ENCODE measurements at regions of chr1 and their contacts with region 1.

Region 1: DNA sequence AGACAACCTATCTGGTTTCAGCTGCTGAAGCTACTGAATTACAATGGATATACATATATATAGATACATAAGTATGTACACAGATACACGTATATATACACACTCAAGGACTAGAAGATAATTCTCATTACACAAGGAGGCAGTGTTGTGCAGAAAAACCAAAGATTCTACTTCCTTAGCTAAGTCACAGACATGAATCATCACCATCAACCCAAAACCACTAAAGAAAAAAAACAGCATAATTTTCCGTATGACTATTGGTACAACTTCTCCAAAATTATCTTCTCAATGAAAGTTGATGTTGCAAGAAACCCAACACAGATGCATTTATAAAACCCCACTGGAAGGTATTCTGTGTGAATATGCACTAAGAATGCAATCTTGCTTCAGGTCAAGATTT is 36.8 kb upstream of the RPF1 start:
- DNase-seq: peak in 4 of 14 experiments; percentile 7 to 89 (median 86)
- ATAC-seq: peak; percentile 98
- H3K4me3 ChIP-seq: no peak overlapping the region
- H3K4me3 Mint-ChIP-seq: peak overlapping the region; percentile 5
- H3K27ac ChIP-seq: no peak overlapping the region
- H3K27ac Mint-ChIP-seq: peak overlapping the region; percentile 1
- H3K4me1 ChIP-seq: peaks cover 17% of the 10 kb centered on the region
- H3K4me1 Mint-ChIP-seq: peaks cover 11% of the 10 kb centered on the region
- H3K27me3 ChIP-seq: no peaks in the 10 kb centered on the region
- H3K27me3 Mint-ChIP-seq: peaks cover 15% of the 10 kb centered on the region
- CTCF ChIP-seq: peak; percentile 69

Region 2: DNA sequence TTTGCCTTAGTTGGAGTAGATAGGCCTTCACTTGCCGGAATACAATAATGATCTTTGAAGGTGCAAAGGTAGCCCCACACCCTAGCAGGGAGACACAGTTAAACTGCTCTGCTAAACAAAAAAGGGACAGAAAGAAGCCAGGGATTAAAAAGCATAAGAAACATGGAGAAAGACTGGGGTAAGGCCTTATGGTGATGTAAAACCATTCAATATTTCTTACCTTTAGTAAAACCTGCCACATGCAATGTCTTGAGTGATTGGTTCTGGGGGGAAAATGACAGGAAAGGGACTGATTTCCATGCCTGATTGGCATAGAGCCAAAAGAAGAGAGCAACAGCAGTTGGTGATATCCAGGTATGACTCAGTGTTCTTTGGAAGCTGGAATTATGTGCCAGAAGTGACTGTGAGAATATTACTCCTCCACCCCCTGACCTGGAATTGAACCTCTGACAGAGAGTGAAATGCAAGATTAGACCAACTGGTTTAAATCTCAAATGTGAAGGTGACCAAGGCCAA is 35.9 kb before region 1 on chr1:
- CTCF ChIA-PET with region 1: no interaction called
- POLR2A ChIA-PET with region 1: no interaction called
- intact Hi-C with region 1: no loop called
- DNase-seq: no peak
- ATAC-seq: no peak
- H3K4me3 ChIP-seq: no peak overlapping the region
- H3K4me3 Mint-ChIP-seq: no peak overlapping the region
- H3K27ac ChIP-seq: no peak overlapping the region
- H3K27ac Mint-ChIP-seq: no peak overlapping the region
- H3K4me1 ChIP-seq: no peaks in the 10 kb centered on the region
- H3K4me1 Mint-ChIP-seq: no peaks in the 10 kb centered on the region
- H3K27me3 ChIP-seq: no peaks in the 10 kb centered on the region
- H3K27me3 Mint-ChIP-seq: no peaks in the 10 kb centered on the region
- CTCF ChIP-seq: no peak

Region 3: DNA sequence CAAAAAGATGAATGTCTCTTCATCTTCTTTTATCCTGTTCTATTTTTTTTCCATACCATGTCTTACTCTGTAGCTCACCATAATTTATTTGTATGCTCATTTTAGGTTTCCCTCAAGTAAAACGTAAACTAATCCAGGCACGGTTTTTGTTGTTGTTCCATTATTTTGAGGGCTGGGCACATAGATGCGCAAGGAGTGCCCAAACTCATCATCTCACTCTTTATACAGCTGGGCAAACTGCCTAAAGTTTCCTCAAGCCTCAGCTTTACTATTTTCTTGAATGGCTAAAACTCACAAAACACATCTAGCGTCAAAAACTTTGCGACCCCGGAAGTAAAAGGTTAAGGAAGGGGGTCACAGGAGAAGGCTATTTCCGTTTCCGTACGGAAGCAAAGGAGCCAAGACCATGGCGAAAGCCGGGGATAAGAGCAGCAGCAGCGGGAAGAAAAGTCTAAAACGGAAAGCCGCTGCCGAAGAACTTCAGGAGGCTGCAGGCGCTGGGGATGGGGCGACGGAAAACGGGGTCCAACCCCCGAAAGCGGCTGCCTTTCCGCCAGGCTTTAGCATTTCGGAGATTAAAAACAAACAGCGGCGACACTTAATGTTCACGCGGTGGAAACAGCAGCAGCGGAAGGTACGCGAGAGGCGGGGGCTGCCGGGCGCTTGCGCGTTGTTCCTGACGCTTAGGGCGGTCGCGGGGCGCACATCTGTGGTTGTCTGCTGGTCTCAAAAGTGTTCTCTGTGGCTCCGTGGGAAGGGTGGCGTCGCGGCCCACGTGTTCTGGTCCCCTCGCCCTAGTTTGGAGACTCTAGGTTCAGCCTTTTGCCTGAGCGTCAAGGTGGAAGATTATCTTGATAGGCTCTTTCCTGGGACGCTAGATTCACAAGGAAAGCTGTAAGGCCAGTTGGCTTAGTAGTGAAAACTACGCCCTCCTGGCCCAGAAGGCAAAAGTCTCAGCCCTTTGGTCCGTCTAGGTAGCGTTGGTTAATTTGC is 36.9 kb after region 1 on chr1 and contains the start of gene RPF1:
- CTCF ChIA-PET with region 1: interaction called, 9 read pairs
- POLR2A ChIA-PET with region 1: interaction called, 16 read pairs
- intact Hi-C with region 1: loop called (anchors 2 kb)
- DNase-seq: peak; percentile 58 to 91 (median 74)
- ATAC-seq: peak; percentile 93
- H3K4me3 ChIP-seq: peak within 1 kb of the TSS; percentile 84
- H3K4me3 Mint-ChIP-seq: peak within 1 kb of the TSS; percentile 97
- H3K27ac ChIP-seq: peak within 1 kb of the TSS; percentile 82 to 85
- H3K27ac Mint-ChIP-seq: peak within 1 kb of the TSS; percentile 95
- H3K4me1 ChIP-seq: peaks cover 13% of the 10 kb centered on the region
- H3K4me1 Mint-ChIP-seq: peaks cover 53% of the 10 kb centered on the region
- H3K27me3 ChIP-seq: peaks cover 3 to 12% of the 10 kb centered on the region in 2 experiments
- H3K27me3 Mint-ChIP-seq: peaks cover 33% of the 10 kb centered on the region
- CTCF ChIP-seq: no peak
- total RNA-seq, gene RPF1: 67.6 to 69.4 TPM

Region 4: GRCh38 chr1:84620720-84621313 is 178.6 kb after region 1 on chr1:
- CTCF ChIA-PET with region 1: interaction called, 14 read pairs
- POLR2A ChIA-PET with region 1: interaction called, 4 read pairs
- intact Hi-C with region 1: loop called (anchors 1 kb)
- DNase-seq: peak; percentile 50 to 88 (median 74)
- ATAC-seq: peak; percentile 92
- H3K4me3 ChIP-seq: peak overlapping the region; percentile 64
- H3K4me3 Mint-ChIP-seq: peak overlapping the region; percentile 95
- H3K27ac ChIP-seq: no peak overlapping the region
- H3K27ac Mint-ChIP-seq: no peak overlapping the region
- H3K4me1 ChIP-seq: peaks cover 8% of the 10 kb centered on the region
- H3K4me1 Mint-ChIP-seq: peaks cover 12% of the 10 kb centered on the region
- H3K27me3 ChIP-seq: no peaks in the 10 kb centered on the region
- H3K27me3 Mint-ChIP-seq: no peaks in the 10 kb centered on the region
- CTCF ChIP-seq: peak; percentile 100

Region 5: DNA sequence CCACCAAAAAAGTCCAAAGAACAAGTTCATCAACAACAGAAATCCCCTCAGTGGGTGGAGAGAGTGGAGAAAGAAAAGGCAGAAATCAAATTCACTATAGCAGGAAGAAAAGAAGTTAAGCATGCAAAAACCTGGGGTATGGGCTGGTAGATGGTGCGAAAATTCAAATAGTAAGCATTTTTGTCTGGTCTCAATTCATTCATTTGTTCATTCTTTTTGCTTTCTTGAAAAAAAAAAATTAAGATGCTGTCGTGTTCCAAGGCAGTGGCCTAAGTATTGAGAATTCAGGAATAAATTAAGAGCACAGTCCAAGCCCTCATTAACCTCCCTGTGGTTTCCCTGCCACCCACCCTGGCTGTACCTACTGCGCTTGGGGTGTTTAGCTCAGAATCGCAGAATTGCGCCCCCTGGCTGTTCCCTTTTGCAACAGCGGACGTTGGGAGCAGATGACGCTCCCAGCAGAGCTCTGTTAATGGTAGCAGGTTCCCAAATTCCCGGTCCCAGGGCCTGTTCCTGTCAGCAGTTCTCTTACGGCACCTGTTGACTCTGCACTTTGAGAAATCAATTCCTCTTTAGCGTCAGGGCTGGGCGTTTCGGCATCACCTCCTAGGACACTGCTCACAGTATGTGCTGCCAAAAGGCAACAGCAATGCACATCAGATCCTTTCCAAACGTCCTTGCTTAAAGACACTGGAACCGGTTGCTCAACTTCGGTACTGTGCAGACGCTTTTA is 282.0 kb after region 1 on chr1:
- CTCF ChIA-PET with region 1: interaction called, 6 read pairs
- POLR2A ChIA-PET with region 1: no interaction called
- intact Hi-C with region 1: loop called in 1 of 2 experiments (anchors 1 kb)
- DNase-seq: peak; percentile 26 to 71 (median 42)
- ATAC-seq: peak; percentile 67
- H3K4me3 ChIP-seq: no peak overlapping the region
- H3K4me3 Mint-ChIP-seq: no peak overlapping the region
- H3K27ac ChIP-seq: no peak overlapping the region
- H3K27ac Mint-ChIP-seq: no peak overlapping the region
- H3K4me1 ChIP-seq: no peaks in the 10 kb centered on the region
- H3K4me1 Mint-ChIP-seq: no peaks in the 10 kb centered on the region
- H3K27me3 ChIP-seq: no peaks in the 10 kb centered on the region
- H3K27me3 Mint-ChIP-seq: peaks cover 3% of the 10 kb centered on the region
- CTCF ChIP-seq: peak; percentile 49